ENCODE measurements at regions of chr2 and their contacts with region 1.

Region 1: GRCh38 chr2:219484343-219485200 is 14.1 kb upstream of the GMPPA start:
- DNase-seq: no peak
- H3K4me3 Mint-ChIP-seq: no peak overlapping the region
- H3K27ac Mint-ChIP-seq: no peak overlapping the region
- H3K4me1 Mint-ChIP-seq: peaks cover 2% of the 10 kb centered on the region
- H3K27me3 Mint-ChIP-seq: peaks cover 87% of the 10 kb centered on the region

Region 2: GRCh38 chr2:219498280-219499057 is 13.9 kb after region 1 on chr2 and contains the start of gene GMPPA:
- CTCF ChIA-PET with region 1: interaction called, 17 read pairs
- DNase-seq: peak; percentile 98
- H3K4me3 Mint-ChIP-seq: peak within 1 kb of the TSS; percentile 92
- H3K27ac Mint-ChIP-seq: peak within 1 kb of the TSS; percentile 73
- H3K4me1 Mint-ChIP-seq: peaks cover 41% of the 10 kb centered on the region
- H3K27me3 Mint-ChIP-seq: peaks cover 53% of the 10 kb centered on the region

Region 3: DNA sequence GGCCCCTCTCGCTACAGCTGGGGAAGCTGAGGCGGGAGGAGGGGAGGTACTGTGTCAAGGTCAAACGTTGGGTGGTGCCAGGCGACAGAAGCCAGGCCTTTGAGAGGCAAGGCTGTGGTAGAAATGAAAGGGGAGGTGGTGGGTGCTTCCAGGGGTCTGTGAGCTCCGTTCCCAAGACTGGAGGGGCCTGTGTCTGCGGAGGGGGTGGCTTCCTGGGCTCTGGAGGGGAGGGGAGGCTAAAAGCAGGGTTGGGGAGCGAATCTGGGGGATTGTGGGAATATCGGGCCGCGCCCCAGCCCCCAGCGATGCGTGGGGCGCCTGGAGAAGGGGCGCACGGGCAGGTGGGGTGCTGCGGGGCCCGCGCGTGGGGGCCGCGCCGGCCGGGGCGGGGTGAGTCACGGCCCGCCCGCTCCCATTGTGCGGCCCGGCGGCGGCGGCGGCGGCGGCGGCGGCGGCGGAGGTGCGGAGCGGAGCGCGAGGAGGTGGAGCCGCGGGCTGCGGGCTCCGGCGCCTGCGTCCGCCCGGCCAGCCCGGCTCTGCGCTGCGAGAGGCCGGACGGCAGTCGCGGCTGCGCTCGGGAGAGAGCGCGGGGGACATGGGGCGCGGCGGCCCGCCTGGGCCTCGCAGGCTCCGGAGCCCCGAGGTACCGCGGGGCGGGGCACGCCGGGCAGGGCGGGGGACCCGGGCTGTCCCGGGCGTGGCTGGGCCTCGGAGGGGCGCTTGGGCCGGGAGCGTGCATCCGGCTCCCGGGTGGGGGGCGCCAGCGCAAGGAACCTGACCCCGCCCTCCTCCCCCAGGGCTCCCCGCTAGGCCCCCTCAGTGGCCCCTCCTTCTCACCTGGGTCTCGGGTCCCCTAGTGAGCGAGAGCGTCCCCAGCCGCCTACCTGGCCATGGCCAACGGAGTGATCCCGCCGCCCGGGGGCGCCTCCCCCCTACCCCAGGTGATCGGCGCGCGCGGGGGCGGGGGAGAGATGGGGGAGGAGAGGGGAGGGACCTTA is 142.8 kb after region 1 on chr2 and contains the start of gene SLC4A3:
- CTCF ChIA-PET with region 1: no interaction called
- DNase-seq: peak; percentile 29
- H3K4me3 Mint-ChIP-seq: peak within 1 kb of the TSS; percentile 66
- H3K27ac Mint-ChIP-seq: no peak within 1 kb of the TSS
- H3K4me1 Mint-ChIP-seq: peaks cover 5% of the 10 kb centered on the region
- H3K27me3 Mint-ChIP-seq: peaks cover 71% of the 10 kb centered on the region

Region 4: DNA sequence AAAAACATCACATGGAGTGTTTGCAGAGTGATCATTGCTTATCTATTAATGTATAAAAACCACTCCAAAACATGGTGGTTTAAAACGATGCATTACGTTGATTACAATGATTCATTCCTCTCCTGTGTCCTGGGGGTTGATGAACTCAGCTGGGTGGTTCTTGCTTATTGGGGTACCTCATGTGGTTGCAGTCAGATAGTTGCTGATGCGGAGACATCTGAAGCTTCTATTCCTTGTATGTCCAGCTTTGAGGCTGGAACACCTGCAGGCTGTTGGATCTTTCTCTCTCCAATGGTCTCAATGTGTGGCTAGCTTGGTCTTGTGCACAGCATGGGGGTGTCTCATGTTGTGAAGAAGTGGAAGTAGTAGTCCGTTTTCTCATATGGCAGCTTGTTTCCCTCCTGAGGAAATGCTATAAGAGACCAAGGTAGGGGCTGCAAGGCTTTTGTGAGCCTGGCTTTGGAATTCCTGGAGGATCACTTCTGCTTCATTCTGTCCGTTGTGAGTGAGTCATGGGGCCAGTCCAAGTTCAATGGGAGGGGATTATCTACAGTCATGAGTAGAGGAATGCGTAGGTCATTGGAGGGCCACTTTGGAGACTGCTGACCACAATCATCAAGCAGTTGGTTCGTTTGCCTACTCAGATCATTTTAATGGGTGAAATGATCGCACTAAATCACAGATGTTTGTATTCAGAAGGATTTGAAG is 743.9 kb after region 1 on chr2:
- CTCF ChIA-PET with region 1: no interaction called
- DNase-seq: no peak
- H3K4me3 Mint-ChIP-seq: no peak overlapping the region
- H3K27ac Mint-ChIP-seq: no peak overlapping the region
- H3K4me1 Mint-ChIP-seq: no peaks in the 10 kb centered on the region
- H3K27me3 Mint-ChIP-seq: no peaks in the 10 kb centered on the region